Activated CD4-positive, alpha-beta T cell treated with anti-CD3 and anti-CD28 coated beads for 36 hours (primary cell): ENCODE measurements at regions of chr7 and their contacts with region 1.

Region 1: GRCh38 chr7:143263266-143264195 is at the start of gene GSTK1:
- DNase-seq: peak; percentile 91
- ATAC-seq: peak; percentile 94
- H3K4me3 Mint-ChIP-seq: peak within 1 kb of the TSS; percentile 98
- H3K27ac Mint-ChIP-seq: peak within 1 kb of the TSS; percentile 98
- H3K4me1 Mint-ChIP-seq: peaks cover 62% of the 10 kb centered on the region
- H3K27me3 Mint-ChIP-seq: no peaks in the 10 kb centered on the region
- total RNA-seq, gene GSTK1: 176 to 219 TPM

Region 2: DNA sequence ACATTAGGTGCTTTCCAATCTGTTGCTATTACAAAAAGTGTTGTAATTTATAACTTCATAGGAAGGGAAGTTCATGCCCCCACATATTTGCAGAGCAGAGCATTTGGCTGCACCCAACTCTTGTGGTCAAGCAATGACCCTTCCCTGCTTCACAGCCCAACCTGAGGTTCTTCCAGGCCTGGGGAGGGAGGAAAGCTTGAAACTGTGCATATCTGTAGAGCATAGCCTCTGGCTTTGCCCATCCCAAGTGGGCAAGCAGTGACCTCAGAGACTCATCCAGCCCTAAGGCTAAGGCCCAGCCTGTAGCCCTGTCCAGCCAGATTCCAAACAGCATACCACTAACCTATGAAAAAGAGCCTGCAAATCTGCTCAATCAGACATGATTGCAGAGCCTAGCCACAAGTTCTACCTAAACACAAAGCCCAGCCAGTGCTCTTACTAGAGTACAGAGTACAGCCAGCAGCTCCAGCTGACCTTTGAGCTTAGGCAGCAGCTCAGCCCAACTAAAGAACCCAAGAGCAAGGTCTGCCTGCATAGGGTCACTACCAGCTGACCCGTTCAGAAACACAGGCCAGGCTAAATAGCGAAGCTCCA is 14.7 kb before region 1 on chr7:
- CTCF ChIA-PET with region 1: interaction called, 11 read pairs
- POLR2A ChIA-PET with region 1: interaction called, 7 read pairs
- intact Hi-C with region 1: loop called in 1 of 2 experiments (anchors 1 kb)
- DNase-seq: no peak
- ATAC-seq: no peak
- H3K4me3 Mint-ChIP-seq: no peak overlapping the region
- H3K27ac Mint-ChIP-seq: no peak overlapping the region
- H3K4me1 Mint-ChIP-seq: peaks cover 75% of the 10 kb centered on the region
- H3K27me3 Mint-ChIP-seq: no peaks in the 10 kb centered on the region

Region 3: GRCh38 chr7:143287935-143288826 is 24.6 kb after region 1 on chr7 and contains the start of gene CASP2:
- CTCF ChIA-PET with region 1: interaction called, 5 read pairs
- POLR2A ChIA-PET with region 1: interaction called, 10 read pairs
- intact Hi-C with region 1: loop called (anchors 1 kb)
- DNase-seq: peak; percentile 100
- ATAC-seq: peak; percentile 94
- H3K4me3 Mint-ChIP-seq: peak within 1 kb of the TSS; percentile 89
- H3K27ac Mint-ChIP-seq: peak within 1 kb of the TSS; percentile 98
- H3K4me1 Mint-ChIP-seq: peaks cover 46% of the 10 kb centered on the region
- H3K27me3 Mint-ChIP-seq: no peaks in the 10 kb centered on the region
- total RNA-seq, gene CASP2: 91.1 to 106 TPM

Region 4: DNA sequence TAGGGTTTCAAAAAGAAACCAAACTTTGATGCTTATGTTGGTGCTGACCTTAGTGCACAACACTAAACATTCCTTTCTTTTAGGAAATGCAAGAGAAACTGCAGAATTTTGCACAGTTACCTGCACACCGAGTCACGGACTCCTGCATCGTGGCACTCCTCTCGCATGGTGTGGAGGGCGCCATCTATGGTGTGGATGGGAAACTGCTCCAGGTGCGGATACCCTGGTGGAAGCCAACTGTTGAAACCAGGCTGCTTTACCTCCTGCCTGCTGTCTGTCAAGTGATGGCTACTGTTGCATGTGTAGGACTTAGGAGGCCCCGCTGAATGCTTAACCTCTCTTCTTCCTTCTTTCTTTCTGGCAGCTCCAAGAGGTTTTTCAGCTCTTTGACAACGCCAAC is 36.3 kb after region 1 on chr7:
- CTCF ChIA-PET with region 1: interaction called, 16 read pairs
- POLR2A ChIA-PET with region 1: no interaction called
- intact Hi-C with region 1: no loop called
- DNase-seq: peak; percentile 76
- ATAC-seq: peak; percentile 95
- H3K4me3 Mint-ChIP-seq: no peak overlapping the region
- H3K27ac Mint-ChIP-seq: no peak overlapping the region
- H3K4me1 Mint-ChIP-seq: peaks cover 34% of the 10 kb centered on the region
- H3K27me3 Mint-ChIP-seq: no peaks in the 10 kb centered on the region